ENCODE measurements at regions of chr11 and their contacts with region 1.

Region 1: GRCh38 chr11:95170294-95170693 is 60.7 kb downstream of the SESN3 start:
- DNase-seq: no peak
- ATAC-seq: no peak
- H3K4me3 ChIP-seq: no peak overlapping the region
- H3K27ac ChIP-seq: no peak overlapping the region
- H3K4me1 ChIP-seq: no peaks in the 10 kb centered on the region
- H3K27me3 ChIP-seq: no peaks in the 10 kb centered on the region
- CTCF ChIP-seq: no peak
- EP300 ChIP-seq: no peak
- POLR2A ChIP-seq: no peak
- RAD21 ChIP-seq: no peak

Region 2: GRCh38 chr11:95050595-95051202 is 119.6 kb before region 1 on chr11:
- CTCF ChIA-PET with region 1: no interaction called
- POLR2A ChIA-PET with region 1: no interaction called
- RAD21 ChIA-PET with region 1: no interaction called
- SMC1A ChIA-PET with region 1: no interaction called
- in situ Hi-C with region 1: no loop called
- intact Hi-C with region 1: no loop called
- DNase-seq: no peak
- ATAC-seq: no peak
- H3K4me3 ChIP-seq: no peak overlapping the region
- H3K27ac ChIP-seq: no peak overlapping the region
- H3K4me1 ChIP-seq: peaks cover 5% of the 10 kb centered on the region; the same call in 1 of the 2 replicates
- H3K27me3 ChIP-seq: no peaks in the 10 kb centered on the region
- CTCF ChIP-seq: no peak
- EP300 ChIP-seq: no peak
- POLR2A ChIP-seq: no peak
- RAD21 ChIP-seq: no peak

Region 3: GRCh38 chr11:95182397-95182796 is 12.1 kb after region 1 on chr11:
- CTCF ChIA-PET with region 1: interaction called, 3 read pairs
- POLR2A ChIA-PET with region 1: no interaction called
- RAD21 ChIA-PET with region 1: no interaction called
- SMC1A ChIA-PET with region 1: interaction called, 10 read pairs
- in situ Hi-C with region 1: no loop called
- intact Hi-C with region 1: no loop called
- DNase-seq: no peak
- ATAC-seq: no peak
- H3K4me3 ChIP-seq: no peak overlapping the region
- H3K27ac ChIP-seq: no peak overlapping the region
- H3K4me1 ChIP-seq: no peaks in the 10 kb centered on the region
- H3K27me3 ChIP-seq: no peaks in the 10 kb centered on the region
- CTCF ChIP-seq: no peak
- EP300 ChIP-seq: no peak
- POLR2A ChIP-seq: no peak
- RAD21 ChIP-seq: no peak

Region 4: DNA sequence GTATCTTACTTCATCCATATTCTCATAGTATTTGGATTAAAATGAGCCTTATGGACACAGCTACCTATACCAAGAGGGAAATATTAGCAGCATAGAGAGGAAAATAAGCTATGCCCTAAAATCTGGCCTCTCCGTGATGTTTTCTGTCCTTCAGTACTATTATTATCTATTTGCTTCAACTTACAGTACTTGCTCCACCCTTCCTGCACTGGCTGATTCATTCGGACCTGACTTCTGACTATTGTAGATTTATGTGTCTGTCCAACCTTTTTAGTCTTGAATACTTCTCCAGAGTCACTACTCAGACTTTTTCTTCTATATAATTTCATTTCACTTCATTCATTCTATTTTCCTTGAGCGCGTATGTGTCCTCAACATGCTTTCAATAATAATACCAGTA is 105.8 kb after region 1 on chr11:
- CTCF ChIA-PET with region 1: no interaction called
- POLR2A ChIA-PET with region 1: no interaction called
- RAD21 ChIA-PET with region 1: no interaction called
- SMC1A ChIA-PET with region 1: no interaction called
- in situ Hi-C with region 1: no loop called
- intact Hi-C with region 1: no loop called
- DNase-seq: no peak
- ATAC-seq: no peak
- H3K4me3 ChIP-seq: no peak overlapping the region
- H3K27ac ChIP-seq: no peak overlapping the region
- H3K4me1 ChIP-seq: peaks cover 6% of the 10 kb centered on the region
- H3K27me3 ChIP-seq: peaks cover 0 to 5% of the 10 kb centered on the region in 2 experiments; a peak in 1 of 4 replicates
- CTCF ChIP-seq: no peak
- EP300 ChIP-seq: no peak
- POLR2A ChIP-seq: no peak
- RAD21 ChIP-seq: no peak